ENCODE measurements at regions of chr11 and their contacts with region 1.

Region 1: GRCh38 chr11:46547579-46547978 is 46.2 kb downstream of the AMBRA1 start:
- DNase-seq: no peak
- H3K4me3 ChIP-seq: no peak overlapping the region
- H3K27ac ChIP-seq: no peak overlapping the region
- H3K4me1 ChIP-seq: peaks cover 4% of the 10 kb centered on the region
- H3K27me3 ChIP-seq: no peaks in the 10 kb centered on the region
- CTCF ChIP-seq: no peak

Region 2: DNA sequence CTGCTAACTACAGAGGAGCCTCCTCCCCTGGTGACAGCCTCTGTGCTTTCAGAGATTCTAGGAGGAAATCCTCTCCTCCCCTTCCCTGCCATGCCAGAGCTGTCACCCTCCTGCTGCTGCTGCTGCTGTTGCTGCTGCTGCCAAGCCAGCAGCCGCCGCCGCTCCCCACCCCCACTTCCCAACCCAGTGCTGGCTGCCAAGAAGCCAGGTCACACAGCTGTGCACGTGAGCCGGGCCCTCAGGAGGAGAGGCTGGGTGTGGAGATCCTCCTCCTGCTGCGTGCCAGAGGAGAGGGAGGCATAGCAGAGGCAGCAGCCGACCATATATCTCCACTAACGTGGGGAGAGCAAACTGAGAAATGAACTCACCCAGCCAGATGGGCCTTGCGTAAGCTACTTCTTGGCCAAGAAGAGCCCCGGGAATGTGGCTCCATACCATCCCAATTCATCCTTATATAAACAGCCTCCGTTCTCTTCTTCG is 687.9 kb before region 1 on chr11:
- CTCF ChIA-PET with region 1: no interaction called
- POLR2A ChIA-PET with region 1: interaction called, 27 read pairs
- intact Hi-C with region 1: no loop called
- DNase-seq: peak in 1 of 2 experiments; percentile 10
- H3K4me3 ChIP-seq: no peak overlapping the region
- H3K27ac ChIP-seq: no peak overlapping the region
- H3K4me1 ChIP-seq: no peaks in the 10 kb centered on the region
- H3K27me3 ChIP-seq: no peaks in the 10 kb centered on the region
- CTCF ChIP-seq: no peak

Region 3: DNA sequence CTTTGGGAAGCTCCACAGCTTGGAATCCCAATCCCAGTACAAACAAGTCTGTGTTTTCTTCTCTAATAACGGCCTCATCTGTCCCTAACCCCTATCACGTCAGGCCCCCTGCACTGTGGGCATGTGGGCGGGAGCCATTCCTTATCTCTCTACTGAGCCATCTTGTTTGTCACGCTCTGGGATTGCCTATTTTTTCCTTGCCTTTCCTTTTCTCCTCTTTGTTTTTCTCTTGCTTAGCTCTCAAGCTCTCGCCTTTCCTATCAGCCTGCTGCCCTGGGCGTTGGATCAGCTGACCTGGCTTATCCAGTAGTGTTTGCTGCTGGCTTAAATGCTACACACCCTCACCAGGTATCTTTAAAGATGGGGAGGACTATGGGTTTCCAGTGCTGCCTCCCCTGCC is 117.0 kb after region 1 on chr11:
- CTCF ChIA-PET with region 1: no interaction called
- POLR2A ChIA-PET with region 1: interaction called, 10 read pairs
- intact Hi-C with region 1: no loop called
- DNase-seq: no peak
- H3K4me3 ChIP-seq: no peak overlapping the region
- H3K27ac ChIP-seq: no peak overlapping the region
- H3K4me1 ChIP-seq: no peaks in the 10 kb centered on the region
- H3K27me3 ChIP-seq: no peaks in the 10 kb centered on the region
- CTCF ChIP-seq: no peak